Activated T-helper 1 cell treated with anti-CD3 and anti-CD28 coated beads, Interleukin-12 subunit alpha, Interleukin-12 subunit beta, Interleukin-2, Interleukin-4 antibody, amounts not matched to agents 30 ng/mL and 10 ng/mL and 1 ng/mL, durations not matched to agents 14 hours and 24 hours and 36 hours (primary cell): ENCODE measurements at regions of chr7 and their contacts with region 1.

Region 1: GRCh38 chr7:50092579-50093491 is at the start of gene ZPBP:
- DNase-seq: peak; percentile 43
- H3K4me3 Mint-ChIP-seq: peak within 1 kb of the TSS; percentile 81
- H3K27ac Mint-ChIP-seq: peak within 1 kb of the TSS; percentile 68
- H3K4me1 Mint-ChIP-seq: peaks cover 4% of the 10 kb centered on the region
- H3K27me3 Mint-ChIP-seq: peaks cover 9% of the 10 kb centered on the region
- total RNA-seq, gene ZPBP: not detected in 2 replicates

Region 2: GRCh38 chr7:50317221-50317678 is 224.4 kb after region 1 on chr7:
- intact Hi-C with region 1: loop called (anchors 5 kb)
- DNase-seq: peak; percentile 53
- H3K4me3 Mint-ChIP-seq: peak overlapping the region; percentile 82
- H3K27ac Mint-ChIP-seq: peak overlapping the region; percentile 93
- H3K4me1 Mint-ChIP-seq: peaks cover 100% of the 10 kb centered on the region
- H3K27me3 Mint-ChIP-seq: no peaks in the 10 kb centered on the region

Region 3: DNA sequence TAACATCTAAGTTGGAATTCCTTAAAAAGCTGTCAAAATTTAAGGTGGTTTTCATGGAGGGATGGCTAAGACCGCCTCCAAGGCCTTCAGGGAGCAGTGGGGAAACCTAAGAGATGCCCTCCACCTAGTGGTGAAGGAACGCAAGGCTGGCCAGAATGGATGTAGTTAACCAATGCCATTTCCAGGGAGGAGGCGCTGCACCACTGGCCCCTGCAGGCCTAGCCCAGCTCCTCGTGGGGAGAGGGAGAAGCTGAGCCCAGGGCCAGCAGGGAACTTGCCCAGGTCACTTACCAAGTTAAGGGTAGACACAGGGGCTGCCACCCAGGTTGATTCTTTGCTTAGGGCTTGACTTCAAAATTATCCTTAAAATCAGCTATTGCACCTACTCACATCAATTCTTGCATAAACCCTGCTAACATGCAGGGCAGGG is 325.3 kb after region 1 on chr7:
- intact Hi-C with region 1: loop called (anchors 1 kb)
- DNase-seq: peak; percentile 64
- H3K4me3 Mint-ChIP-seq: no peak overlapping the region
- H3K27ac Mint-ChIP-seq: no peak overlapping the region
- H3K4me1 Mint-ChIP-seq: peaks cover 32% of the 10 kb centered on the region
- H3K27me3 Mint-ChIP-seq: no peaks in the 10 kb centered on the region

Region 4: GRCh38 chr7:50632561-50633413 is 540.0 kb after region 1 on chr7:
- intact Hi-C with region 1: loop called (anchors 1 kb)
- DNase-seq: peak; percentile 24
- H3K4me3 Mint-ChIP-seq: no peak overlapping the region
- H3K27ac Mint-ChIP-seq: no peak overlapping the region
- H3K4me1 Mint-ChIP-seq: peaks cover 4% of the 10 kb centered on the region
- H3K27me3 Mint-ChIP-seq: peaks cover 17% of the 10 kb centered on the region

Region 5: GRCh38 chr7:51067757-51068156 is 974.9 kb after region 1 on chr7:
- intact Hi-C with region 1: loop called (anchors 1 kb)
- DNase-seq: peak; percentile 17
- H3K4me3 Mint-ChIP-seq: no peak overlapping the region
- H3K27ac Mint-ChIP-seq: no peak overlapping the region
- H3K4me1 Mint-ChIP-seq: no peaks in the 10 kb centered on the region
- H3K27me3 Mint-ChIP-seq: peaks cover 5% of the 10 kb centered on the region